ENCODE measurements at regions of chr10 and their contacts with region 1.

Region 1: GRCh38 chr10:28179006-28179742 is 123.7 kb downstream of the MPP7 start:
- DNase-seq: peak; percentile 58
- H3K4me3 Mint-ChIP-seq: no peak overlapping the region
- H3K27ac Mint-ChIP-seq: peak overlapping the region; percentile 81
- H3K4me1 Mint-ChIP-seq: peaks cover 44% of the 10 kb centered on the region
- H3K27me3 Mint-ChIP-seq: no peaks in the 10 kb centered on the region

Region 2: GRCh38 chr10:27446091-27446918 is 732.9 kb before region 1 on chr10:
- CTCF ChIA-PET with region 1: no interaction called
- intact Hi-C with region 1: loop called (anchors 2 kb)
- DNase-seq: no peak
- H3K4me3 Mint-ChIP-seq: no peak overlapping the region
- H3K27ac Mint-ChIP-seq: no peak overlapping the region
- H3K4me1 Mint-ChIP-seq: peaks cover 7% of the 10 kb centered on the region
- H3K27me3 Mint-ChIP-seq: no peaks in the 10 kb centered on the region

Region 3: GRCh38 chr10:27742195-27743011 is 436.8 kb before region 1 on chr10:
- CTCF ChIA-PET with region 1: interaction called, 12 read pairs
- intact Hi-C with region 1: loop called (anchors 1 kb)
- DNase-seq: peak; percentile 88
- H3K4me3 Mint-ChIP-seq: peak overlapping the region; percentile 68
- H3K27ac Mint-ChIP-seq: no peak overlapping the region
- H3K4me1 Mint-ChIP-seq: peaks cover 31% of the 10 kb centered on the region
- H3K27me3 Mint-ChIP-seq: peaks cover 49% of the 10 kb centered on the region

Region 4: GRCh38 chr10:27998254-27999004 is 180.7 kb before region 1 on chr10:
- CTCF ChIA-PET with region 1: no interaction called
- intact Hi-C with region 1: loop called (anchors 2 kb)
- DNase-seq: peak; percentile 21
- H3K4me3 Mint-ChIP-seq: peak overlapping the region; percentile 82
- H3K27ac Mint-ChIP-seq: no peak overlapping the region
- H3K4me1 Mint-ChIP-seq: peaks cover 10% of the 10 kb centered on the region
- H3K27me3 Mint-ChIP-seq: peaks cover 31% of the 10 kb centered on the region

Region 5: DNA sequence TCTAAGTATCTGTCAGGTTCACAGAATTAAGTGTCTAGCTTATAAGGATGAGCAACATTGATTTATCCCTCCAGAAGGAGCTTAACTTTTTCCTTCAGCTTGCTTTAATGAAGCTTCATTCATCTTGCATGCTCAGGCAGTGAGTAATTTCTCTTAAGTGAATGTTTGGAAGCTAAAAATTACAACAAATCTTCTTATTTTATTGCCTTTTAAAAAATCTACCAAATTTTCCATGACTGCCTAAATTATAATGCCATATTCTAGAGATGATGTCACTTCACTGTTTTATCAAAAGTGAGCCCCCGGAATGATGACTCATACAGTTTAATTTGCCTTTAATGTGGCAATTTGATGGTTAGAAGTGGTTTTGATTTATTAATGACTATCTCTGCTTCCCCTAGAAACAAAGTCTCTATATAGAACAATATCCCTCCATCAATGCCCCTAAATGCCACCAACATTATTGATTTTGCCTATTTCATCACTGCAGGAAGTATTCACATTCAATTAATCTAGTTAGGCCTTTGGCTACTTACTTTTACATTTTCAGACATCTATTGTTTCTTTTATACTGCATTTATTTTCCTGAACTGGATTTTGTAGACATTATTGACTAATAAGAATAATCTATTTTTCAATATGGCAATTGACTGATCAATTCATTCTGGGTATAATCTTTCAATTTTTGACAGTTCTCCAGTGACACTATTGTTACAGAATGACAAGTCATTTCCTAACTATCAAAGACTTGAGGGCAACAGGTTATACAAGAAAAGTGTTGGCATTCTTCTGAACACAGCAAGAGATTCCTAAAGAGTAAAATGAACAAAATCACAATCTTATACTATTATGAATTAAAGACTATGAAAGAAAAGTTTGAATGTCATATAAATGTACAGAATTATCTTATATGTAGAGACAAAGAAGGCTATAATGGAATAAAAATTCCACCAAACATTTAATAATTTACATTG is 41.0 kb before region 1 on chr10:
- CTCF ChIA-PET with region 1: no interaction called
- intact Hi-C with region 1: no loop called
- DNase-seq: no peak
- H3K4me3 Mint-ChIP-seq: no peak overlapping the region
- H3K27ac Mint-ChIP-seq: no peak overlapping the region
- H3K4me1 Mint-ChIP-seq: peaks cover 3% of the 10 kb centered on the region
- H3K27me3 Mint-ChIP-seq: no peaks in the 10 kb centered on the region

Region 6: DNA sequence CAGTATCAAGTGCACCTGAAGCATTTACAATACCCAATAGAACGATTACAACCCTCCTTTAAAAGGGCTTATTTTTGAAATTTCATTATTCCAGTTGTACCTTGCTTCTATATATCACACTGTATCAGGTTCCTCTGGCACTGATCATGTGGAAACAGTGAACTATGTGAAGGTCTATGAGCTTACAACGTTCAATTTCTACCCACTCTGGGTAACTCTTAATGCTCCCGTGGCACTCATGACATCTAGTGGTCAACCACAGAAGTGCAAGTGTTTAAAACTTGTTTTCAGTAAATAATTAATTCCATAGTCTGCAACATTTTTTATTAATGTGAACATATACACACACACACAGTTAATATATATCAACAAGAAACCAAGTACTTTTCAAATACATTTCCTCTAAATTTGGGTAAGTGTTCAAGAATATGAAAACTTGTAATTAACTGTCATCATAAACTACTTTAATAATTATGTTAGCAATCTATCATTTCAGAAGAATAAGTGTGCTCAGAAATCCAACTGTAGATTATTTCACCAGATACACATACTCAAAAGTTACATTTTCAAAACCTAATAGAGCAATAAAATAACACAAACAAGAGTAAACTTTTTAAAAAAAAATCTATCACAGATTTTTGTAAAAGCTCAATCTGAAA is 62.7 kb after region 1 on chr10:
- CTCF ChIA-PET with region 1: interaction called, 15 read pairs
- intact Hi-C with region 1: loop called (anchors 1 kb)
- DNase-seq: peak; percentile 63
- H3K4me3 Mint-ChIP-seq: no peak overlapping the region
- H3K27ac Mint-ChIP-seq: no peak overlapping the region
- H3K4me1 Mint-ChIP-seq: peaks cover 36% of the 10 kb centered on the region
- H3K27me3 Mint-ChIP-seq: no peaks in the 10 kb centered on the region

Region 7: DNA sequence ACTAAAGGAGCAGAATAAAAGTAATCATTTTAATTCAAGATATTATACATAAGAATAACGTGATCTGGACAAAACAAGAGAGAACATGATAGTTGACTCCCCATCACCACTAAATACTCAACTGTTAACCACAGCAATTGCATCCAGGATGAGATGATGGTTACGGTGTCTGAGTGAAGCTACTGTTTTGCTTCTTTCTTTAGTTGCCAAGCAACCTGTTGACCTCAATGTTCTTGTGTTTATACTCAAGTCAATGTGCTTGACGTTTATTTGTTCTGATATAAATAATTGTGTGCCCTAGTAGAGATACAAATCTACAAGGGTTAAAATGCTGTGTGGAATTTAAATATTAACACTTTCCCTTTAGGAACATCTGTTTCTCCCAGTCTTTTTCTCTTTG is 155.1 kb after region 1 on chr10:
- CTCF ChIA-PET with region 1: no interaction called
- intact Hi-C with region 1: loop called (anchors 5 kb)
- DNase-seq: peak; percentile 61
- H3K4me3 Mint-ChIP-seq: peak overlapping the region; percentile 67
- H3K27ac Mint-ChIP-seq: peak overlapping the region; percentile 96
- H3K4me1 Mint-ChIP-seq: peaks cover 76% of the 10 kb centered on the region
- H3K27me3 Mint-ChIP-seq: no peaks in the 10 kb centered on the region

Measured in activated naive CD4-positive, alpha-beta T cell treated with anti-CD3 and anti-CD28 coated beads for 36 hours (primary cell).